Activated CD4-positive, alpha-beta T cell treated with anti-CD3 and anti-CD28 coated beads for 36 hours (primary cell): ENCODE measurements at regions of chr2 and their contacts with region 1.

Region 1: DNA sequence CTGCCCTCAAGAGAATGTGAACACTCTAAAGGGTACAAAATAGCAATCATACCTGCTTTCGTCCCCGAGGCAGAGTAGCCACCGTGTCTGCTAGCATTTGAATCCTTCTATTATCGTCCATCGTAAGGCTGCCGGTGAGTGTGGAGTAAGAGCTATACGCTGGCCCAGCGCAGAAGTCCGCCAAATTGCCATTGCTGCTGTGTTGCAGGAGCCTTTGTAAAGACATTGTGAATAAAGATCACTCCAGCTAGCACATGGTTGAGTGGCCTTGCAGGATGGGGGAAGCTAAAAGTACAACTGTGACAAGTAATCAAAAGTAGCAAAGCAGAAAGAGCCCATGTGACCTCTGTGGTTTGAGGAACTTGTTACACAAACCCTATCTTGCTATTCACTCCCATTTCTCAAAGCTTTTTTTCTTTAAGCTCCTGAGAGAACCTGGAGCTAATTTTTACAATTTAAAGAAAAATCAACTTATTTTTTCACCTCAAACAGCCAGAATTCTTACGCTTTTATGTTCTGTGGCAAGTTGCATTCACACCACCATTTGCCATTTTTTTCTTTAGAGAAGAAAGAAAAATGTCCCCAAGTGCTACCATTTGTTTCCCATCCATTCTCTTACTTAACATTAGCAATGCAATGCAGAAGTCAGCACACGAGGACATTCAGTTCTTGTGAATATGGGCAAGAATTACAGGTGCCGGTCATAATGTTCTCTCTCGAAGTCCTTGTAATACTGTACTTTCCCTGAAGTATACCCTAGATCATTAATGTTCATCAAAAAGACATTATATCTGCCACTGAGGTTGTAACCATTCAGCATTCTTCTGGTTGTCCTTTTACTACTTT is at the start of gene CYTIP:
- DNase-seq: peak; percentile 82
- ATAC-seq: peak; percentile 44
- H3K4me3 Mint-ChIP-seq: peak within 1 kb of the TSS; percentile 93
- H3K27ac Mint-ChIP-seq: peak within 1 kb of the TSS; percentile 95
- H3K4me1 Mint-ChIP-seq: peaks cover 40% of the 10 kb centered on the region
- H3K27me3 Mint-ChIP-seq: no peaks in the 10 kb centered on the region
- total RNA-seq, gene CYTIP: 470 to 536 TPM

Region 2: GRCh38 chr2:156341452-156342253 is 1102.4 kb before region 1 on chr2:
- CTCF ChIA-PET with region 1: no interaction called
- POLR2A ChIA-PET with region 1: no interaction called
- intact Hi-C with region 1: loop called (anchors 10 kb)
- DNase-seq: peak; percentile 94
- ATAC-seq: peak; percentile 79
- H3K4me3 Mint-ChIP-seq: peak overlapping the region; percentile 84
- H3K27ac Mint-ChIP-seq: peak overlapping the region; percentile 95
- H3K4me1 Mint-ChIP-seq: peaks cover 53% of the 10 kb centered on the region
- H3K27me3 Mint-ChIP-seq: no peaks in the 10 kb centered on the region

Region 3: DNA sequence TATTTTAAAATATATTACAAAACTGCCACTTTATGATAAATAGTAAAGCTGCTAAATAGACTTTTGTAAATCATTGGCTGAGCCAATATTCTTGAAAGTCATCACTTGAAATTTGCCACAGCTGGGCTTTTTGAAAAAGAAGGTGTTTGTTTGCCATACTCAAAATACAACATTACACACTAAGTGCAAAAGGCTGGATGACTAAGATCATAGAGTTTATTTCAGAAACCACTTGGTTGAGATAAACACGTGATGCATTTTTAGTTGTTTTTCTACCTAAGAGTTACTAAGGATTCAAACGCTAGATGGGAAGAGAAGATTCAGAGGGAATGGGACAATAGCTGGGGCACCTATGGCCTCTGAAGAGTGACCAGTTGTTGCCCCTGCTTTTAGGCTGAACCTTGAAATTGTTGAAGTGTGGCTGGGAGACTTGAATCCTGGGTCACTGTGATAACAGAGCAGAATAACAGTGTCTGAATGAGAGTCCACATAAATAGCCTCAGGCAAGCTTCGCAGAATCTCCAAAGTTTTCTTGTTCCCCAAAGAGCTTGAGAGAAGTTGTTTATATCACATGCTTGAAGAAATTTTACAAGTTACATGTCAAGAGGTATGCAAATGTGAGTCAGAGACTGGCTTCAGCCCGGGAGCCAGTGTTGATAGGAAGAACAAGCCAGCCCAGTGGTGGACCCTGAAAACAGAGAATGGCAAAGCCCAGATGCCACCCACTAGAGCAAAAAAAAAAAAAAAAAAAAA is 598.0 kb before region 1 on chr2:
- CTCF ChIA-PET with region 1: no interaction called
- POLR2A ChIA-PET with region 1: no interaction called
- intact Hi-C with region 1: no loop called
- DNase-seq: no peak
- ATAC-seq: no peak
- H3K4me3 Mint-ChIP-seq: no peak overlapping the region
- H3K27ac Mint-ChIP-seq: no peak overlapping the region
- H3K4me1 Mint-ChIP-seq: no peaks in the 10 kb centered on the region
- H3K27me3 Mint-ChIP-seq: no peaks in the 10 kb centered on the region

Region 4: GRCh38 chr2:157420771-157421323 is 23.2 kb before region 1 on chr2:
- CTCF ChIA-PET with region 1: interaction called, 32 read pairs
- POLR2A ChIA-PET with region 1: interaction called, 26 read pairs
- intact Hi-C with region 1: loop called in 1 of 2 experiments (anchors 2 kb)
- DNase-seq: peak; percentile 60
- ATAC-seq: peak; percentile 57
- H3K4me3 Mint-ChIP-seq: peak overlapping the region; percentile 52
- H3K27ac Mint-ChIP-seq: peak overlapping the region; percentile 93
- H3K4me1 Mint-ChIP-seq: peaks cover 78% of the 10 kb centered on the region
- H3K27me3 Mint-ChIP-seq: no peaks in the 10 kb centered on the region

Region 5: GRCh38 chr2:157460384-157460837 is 16.4 kb after region 1 on chr2:
- CTCF ChIA-PET with region 1: interaction called, 32 read pairs
- POLR2A ChIA-PET with region 1: interaction called, 21 read pairs
- intact Hi-C with region 1: loop called (anchors 1 kb)
- DNase-seq: no peak
- ATAC-seq: no peak
- H3K4me3 Mint-ChIP-seq: peak overlapping the region; percentile 10
- H3K27ac Mint-ChIP-seq: peak overlapping the region; percentile 72
- H3K4me1 Mint-ChIP-seq: peaks cover 93% of the 10 kb centered on the region
- H3K27me3 Mint-ChIP-seq: no peaks in the 10 kb centered on the region

Region 6: GRCh38 chr2:157480182-157480961 is 36.4 kb after region 1 on chr2:
- CTCF ChIA-PET with region 1: interaction called, 10 read pairs
- POLR2A ChIA-PET with region 1: interaction called, 44 read pairs
- intact Hi-C with region 1: loop called (anchors 1 kb)
- DNase-seq: peak; percentile 81
- ATAC-seq: peak; percentile 71
- H3K4me3 Mint-ChIP-seq: peak overlapping the region; percentile 64
- H3K27ac Mint-ChIP-seq: peak overlapping the region; percentile 95
- H3K4me1 Mint-ChIP-seq: peaks cover 86% of the 10 kb centered on the region
- H3K27me3 Mint-ChIP-seq: no peaks in the 10 kb centered on the region

Region 7: DNA sequence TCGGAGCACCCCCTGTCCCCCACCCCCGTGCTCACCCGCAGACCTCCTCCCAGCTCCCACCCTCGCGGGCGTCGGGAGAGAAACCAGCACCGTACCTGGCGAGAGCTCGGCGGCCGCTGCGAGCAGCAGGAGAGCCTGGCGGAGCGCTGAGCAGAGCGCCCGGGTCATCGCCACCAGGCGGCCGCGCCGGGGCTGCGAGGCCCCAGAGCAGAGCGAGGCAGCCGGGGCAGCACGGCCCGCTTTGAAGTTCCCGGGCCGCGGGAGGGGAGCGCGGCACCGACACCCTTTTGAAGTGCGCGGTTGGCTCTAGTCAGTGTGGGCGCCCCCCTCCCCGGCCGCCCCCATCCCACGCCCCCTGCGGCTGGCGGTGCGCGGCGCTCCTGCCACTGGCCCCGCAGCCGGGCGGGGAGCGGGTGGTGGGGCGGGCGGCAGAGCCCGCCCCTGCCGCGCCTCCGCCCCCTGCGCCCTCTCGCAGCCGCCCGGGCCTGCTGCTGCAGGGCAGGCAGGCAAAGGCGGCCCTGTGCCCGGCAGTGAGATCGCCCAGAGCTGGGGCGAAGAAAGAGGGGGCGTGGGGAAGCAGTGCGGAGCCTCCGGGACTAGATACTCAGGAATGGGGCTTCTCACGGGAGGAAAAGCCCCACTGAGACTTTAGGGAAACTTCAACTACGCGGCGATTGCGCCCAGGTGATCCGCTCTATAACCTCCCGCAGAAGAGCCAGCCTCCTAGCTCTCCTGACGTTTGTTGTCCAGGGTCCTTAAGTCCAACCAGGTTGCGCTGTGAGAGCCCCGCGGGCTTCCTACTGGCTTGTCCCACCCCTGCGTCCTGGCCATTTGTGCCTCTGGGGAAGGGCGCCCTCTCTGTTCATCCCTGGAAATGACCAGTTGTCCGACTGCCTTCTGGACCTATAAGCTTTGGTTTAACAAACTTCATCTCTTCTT is 184.7 kb after region 1 on chr2 and contains the start of gene ACVR1C:
- CTCF ChIA-PET with region 1: interaction called, 6 read pairs
- POLR2A ChIA-PET with region 1: interaction called, 7 read pairs
- intact Hi-C with region 1: loop called in 1 of 2 experiments (anchors 1 kb)
- DNase-seq: peak; percentile 80
- ATAC-seq: peak; percentile 82
- H3K4me3 Mint-ChIP-seq: peak within 1 kb of the TSS; percentile 76
- H3K27ac Mint-ChIP-seq: peak within 1 kb of the TSS; percentile 23
- H3K4me1 Mint-ChIP-seq: peaks cover 34% of the 10 kb centered on the region
- H3K27me3 Mint-ChIP-seq: peaks cover 5% of the 10 kb centered on the region
- total RNA-seq, gene ACVR1C: 1.6 to 1.7 TPM